ENCODE measurements at regions of chr17 and their contacts with region 1.

Region 1: GRCh38 chr17:65556014-65556909 is 5.2 kb downstream of the AXIN2 start:
- DNase-seq: peak; percentile 97
- H3K4me3 ChIP-seq: peak overlapping the region; percentile 10
- H3K27ac ChIP-seq: peak overlapping the region; percentile 50
- H3K4me1 ChIP-seq: peaks cover 19% of the 10 kb centered on the region
- H3K27me3 ChIP-seq: no peaks in the 10 kb centered on the region
- CTCF ChIP-seq: peak; percentile 92

Region 2: DNA sequence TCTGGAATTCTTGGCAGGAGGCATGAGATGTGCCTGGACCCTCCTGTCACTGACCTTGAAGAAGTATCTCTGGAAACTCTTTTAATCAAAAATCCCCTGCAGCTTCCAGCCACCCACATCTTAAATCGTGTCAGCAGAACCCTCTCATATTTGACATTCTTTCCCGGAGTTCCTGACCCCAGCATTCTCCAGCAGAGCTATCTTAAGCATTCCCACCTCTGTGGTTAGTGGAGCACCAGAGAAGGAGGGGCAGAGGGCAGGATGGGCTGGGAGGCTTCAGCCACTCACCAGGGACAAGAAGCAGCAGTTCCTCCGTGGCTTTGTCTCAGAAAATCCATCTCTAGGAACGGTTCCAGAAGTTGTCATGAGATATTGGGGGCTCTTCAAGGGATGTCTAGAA is 269.2 kb before region 1 on chr17:
- intact Hi-C with region 1: loop called (anchors 5 kb)
- DNase-seq: no peak
- H3K4me3 ChIP-seq: no peak overlapping the region
- H3K27ac ChIP-seq: no peak overlapping the region
- H3K4me1 ChIP-seq: no peaks in the 10 kb centered on the region
- H3K27me3 ChIP-seq: no peaks in the 10 kb centered on the region
- CTCF ChIP-seq: no peak

Region 3: GRCh38 chr17:65455972-65456343 is 100.3 kb before region 1 on chr17:
- intact Hi-C with region 1: loop called (anchors 5 kb)
- DNase-seq: peak; percentile 34
- H3K4me3 ChIP-seq: no peak overlapping the region
- H3K27ac ChIP-seq: no peak overlapping the region
- H3K4me1 ChIP-seq: no peaks in the 10 kb centered on the region
- H3K27me3 ChIP-seq: no peaks in the 10 kb centered on the region
- CTCF ChIP-seq: no peak

Region 4: GRCh38 chr17:65618516-65618915 is 62.3 kb after region 1 on chr17:
- intact Hi-C with region 1: no loop called
- DNase-seq: no peak
- H3K4me3 ChIP-seq: no peak overlapping the region
- H3K27ac ChIP-seq: no peak overlapping the region
- H3K4me1 ChIP-seq: no peaks in the 10 kb centered on the region
- H3K27me3 ChIP-seq: no peaks in the 10 kb centered on the region
- CTCF ChIP-seq: no peak